ENCODE measurements at regions of chr10 and their contacts with region 1.

Region 1: DNA sequence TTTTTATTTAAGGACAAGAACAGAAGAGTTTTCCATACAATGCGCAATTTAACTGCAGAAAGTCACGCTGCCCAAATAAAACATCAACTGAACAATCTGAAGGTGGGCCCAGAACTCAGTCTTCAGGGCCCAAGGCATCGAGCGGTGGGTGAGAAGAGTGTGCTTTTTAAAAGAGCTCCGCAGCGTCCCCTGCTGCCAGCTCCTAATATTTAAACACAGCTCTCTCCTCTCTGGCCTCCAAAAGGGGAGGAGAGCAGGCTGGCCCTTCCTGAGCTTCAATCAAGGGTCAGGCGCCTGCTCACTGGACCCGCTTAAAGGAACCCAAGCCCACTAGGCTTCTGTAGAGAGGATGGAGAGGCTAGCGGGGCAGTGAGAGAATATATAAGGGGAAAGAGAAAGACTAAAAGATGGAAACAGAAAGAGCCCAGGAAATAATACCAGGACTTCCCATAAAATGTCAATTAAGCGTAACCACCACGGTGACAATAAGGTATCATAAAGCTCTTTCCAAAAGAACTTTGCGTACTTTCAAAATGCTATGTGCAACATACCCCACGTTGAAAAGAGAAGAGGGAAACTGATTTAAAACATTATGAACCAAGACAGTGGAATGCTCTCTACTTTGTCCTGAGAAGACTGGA is 2.8 kb downstream of the FAM53B start:
- DNase-seq: no peak
- H3K4me3 ChIP-seq: peak overlapping the region; percentile 10 to 79 (median 58)
- H3K27ac ChIP-seq: peak overlapping the region; percentile 89 to 90 (median 89)
- H3K4me1 ChIP-seq: peaks cover 70 to 85% (median 84%) of the 10 kb centered on the region in 4 donors
- H3K27me3 ChIP-seq: no peaks in the 10 kb centered on the region
- CTCF ChIP-seq: peak; percentile 85 to 94 (median 89)
- EP300 ChIP-seq: no peak
- POLR2A ChIP-seq: no peak

Region 2: DNA sequence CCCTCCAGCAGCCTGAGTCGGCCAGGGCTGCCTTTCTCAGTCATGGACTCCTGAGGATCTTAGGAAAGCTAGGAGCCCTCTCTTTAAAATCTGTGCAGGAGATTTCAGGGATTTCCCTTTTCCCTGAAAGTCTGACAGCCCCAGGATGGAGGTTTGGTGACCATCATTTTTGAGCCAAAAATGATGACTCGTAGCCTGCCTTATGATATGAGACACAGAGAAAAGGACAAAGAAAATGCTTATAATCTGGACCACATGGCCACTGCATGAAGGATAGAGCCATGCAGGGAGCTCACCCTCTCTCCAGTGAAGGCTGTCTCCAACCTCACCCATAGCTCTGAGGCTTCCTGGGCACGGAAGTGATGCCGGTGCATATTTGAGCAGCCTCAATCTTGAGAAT is 541.4 kb before region 1 on chr10:
- intact Hi-C with region 1: no loop called
- DNase-seq: no peak
- H3K4me3 ChIP-seq: no peak overlapping the region
- H3K27ac ChIP-seq: no peak overlapping the region
- H3K4me1 ChIP-seq: peaks cover 0 to 3% (median 0%) of the 10 kb centered on the region in 4 donors
- H3K27me3 ChIP-seq: no peaks in the 10 kb centered on the region
- CTCF ChIP-seq: no peak
- EP300 ChIP-seq: no peak
- POLR2A ChIP-seq: no peak

Region 3: DNA sequence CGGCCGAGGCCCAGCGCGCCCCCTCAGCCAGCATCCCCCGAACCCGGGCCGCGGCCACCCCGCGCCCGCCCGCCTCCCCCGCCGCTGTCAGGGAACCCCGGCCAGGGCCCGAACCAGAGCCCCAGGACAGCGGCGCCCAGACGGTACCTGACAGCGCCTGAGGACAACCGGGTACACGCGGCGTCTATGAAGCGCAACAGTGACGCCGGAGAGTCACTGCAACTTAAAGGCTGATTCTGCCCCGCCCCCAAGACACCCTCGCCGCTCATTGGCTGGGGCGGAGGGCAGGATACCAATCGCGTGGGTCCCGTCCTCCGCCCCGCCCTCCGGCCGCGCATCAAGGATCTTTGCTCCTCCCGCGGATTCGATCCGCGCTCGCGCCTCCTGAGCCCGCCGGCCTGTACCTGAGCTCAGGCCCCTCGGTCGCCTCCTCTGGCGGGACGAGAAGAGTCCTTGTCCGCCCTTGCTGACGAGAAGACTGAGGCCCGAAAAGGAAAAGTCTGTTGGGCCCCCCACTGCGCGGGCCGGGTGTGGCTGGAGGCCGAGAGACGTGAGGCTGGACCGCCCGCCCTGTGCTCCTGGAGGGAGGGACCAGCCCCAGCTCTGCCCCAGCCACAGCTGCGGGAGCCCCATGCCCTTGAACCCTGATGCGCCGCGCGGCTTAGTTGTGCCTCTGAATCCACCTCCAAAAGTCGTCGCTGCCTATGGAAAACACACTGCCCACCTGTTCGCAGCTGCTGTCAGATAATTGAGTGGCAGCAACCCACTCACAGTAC is 322.5 kb before region 1 on chr10 and contains the start of gene OAT:
- intact Hi-C with region 1: loop called (anchors 5 kb)
- DNase-seq: peak; percentile 98
- H3K4me3 ChIP-seq: peak within 1 kb of the TSS; percentile 79 to 97 (median 94)
- H3K27ac ChIP-seq: peak within 1 kb of the TSS; percentile 97 to 99 (median 98)
- H3K4me1 ChIP-seq: peaks cover 14 to 46% (median 46%) of the 10 kb centered on the region in 4 donors
- H3K27me3 ChIP-seq: no peaks in the 10 kb centered on the region
- CTCF ChIP-seq: no peak
- EP300 ChIP-seq: no peak
- POLR2A ChIP-seq: peak; percentile 92
- total RNA-seq, gene OAT: 98.8 to 169 (median 143) TPM

Region 4: GRCh38 chr10:124539935-124540641 is 201.3 kb before region 1 on chr10:
- intact Hi-C with region 1: loop called (anchors 2 kb)
- DNase-seq: no peak
- H3K4me3 ChIP-seq: peak overlapping the region in 1 of 4 donors; percentile 21
- H3K27ac ChIP-seq: no peak overlapping the region
- H3K4me1 ChIP-seq: peaks cover 9 to 23% (median 16%) of the 10 kb centered on the region in 4 donors
- H3K27me3 ChIP-seq: no peaks in the 10 kb centered on the region
- CTCF ChIP-seq: peak; percentile 84 to 89 (median 89)
- EP300 ChIP-seq: no peak
- POLR2A ChIP-seq: no peak

Region 5: GRCh38 chr10:124632064-124632531 is 109.3 kb before region 1 on chr10:
- intact Hi-C with region 1: loop called (anchors 5 kb)
- DNase-seq: no peak
- H3K4me3 ChIP-seq: no peak overlapping the region
- H3K27ac ChIP-seq: peak overlapping the region in 3 of 4 donors; percentile 10 to 62 (median 46)
- H3K4me1 ChIP-seq: peaks cover 58 to 68% (median 61%) of the 10 kb centered on the region in 4 donors
- H3K27me3 ChIP-seq: no peaks in the 10 kb centered on the region
- CTCF ChIP-seq: peak; percentile 37 to 49 (median 38)
- EP300 ChIP-seq: no peak
- POLR2A ChIP-seq: no peak

Region 6: DNA sequence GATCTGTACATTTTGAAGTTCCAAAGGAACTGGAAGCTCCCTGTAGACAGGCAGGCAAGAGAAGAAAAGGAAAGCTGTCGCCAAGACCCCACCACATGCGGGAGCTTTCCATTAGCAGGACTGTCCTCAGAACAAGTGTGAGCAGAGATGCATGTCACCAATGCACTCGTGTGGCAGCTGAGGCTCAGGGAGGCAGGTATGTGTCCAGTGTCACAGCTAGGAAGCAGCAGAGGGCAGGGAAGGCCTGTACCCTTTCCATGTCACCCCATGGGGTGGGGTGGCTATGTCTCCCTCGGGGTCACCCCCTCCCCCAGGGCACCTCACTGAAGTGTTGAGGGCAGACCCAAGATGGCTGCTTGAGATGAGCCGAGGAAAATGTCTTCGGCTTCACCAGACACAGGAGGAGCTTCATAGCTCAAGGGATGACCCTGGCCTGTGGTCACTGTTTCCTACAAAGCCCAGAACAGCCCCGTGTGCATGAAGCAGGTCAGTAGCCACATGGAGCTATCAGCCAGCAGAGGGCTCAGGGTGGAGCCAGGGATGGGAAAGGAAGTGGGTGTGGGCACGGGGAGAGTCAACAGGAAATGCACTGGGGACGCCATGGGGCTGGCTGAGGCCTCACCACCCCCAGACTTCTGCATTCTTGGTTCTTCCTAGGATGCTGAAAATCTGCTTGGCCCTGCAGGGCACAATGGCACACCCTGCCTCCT is 93.8 kb before region 1 on chr10:
- intact Hi-C with region 1: loop called (anchors 5 kb)
- DNase-seq: no peak
- H3K4me3 ChIP-seq: no peak overlapping the region
- H3K27ac ChIP-seq: peak overlapping the region; percentile 39 to 76 (median 72)
- H3K4me1 ChIP-seq: peaks cover 72 to 97% (median 91%) of the 10 kb centered on the region in 4 donors
- H3K27me3 ChIP-seq: no peaks in the 10 kb centered on the region
- CTCF ChIP-seq: peak in 2 of 3 experiments; percentile 5 to 26
- EP300 ChIP-seq: no peak
- POLR2A ChIP-seq: no peak

Region 7: GRCh38 chr10:124708922-124709520 is 32.4 kb before region 1 on chr10:
- intact Hi-C with region 1: loop called (anchors 5 kb)
- DNase-seq: no peak
- H3K4me3 ChIP-seq: no peak overlapping the region
- H3K27ac ChIP-seq: peak overlapping the region; percentile 49 to 86 (median 68)
- H3K4me1 ChIP-seq: peaks cover 75 to 94% (median 83%) of the 10 kb centered on the region in 4 donors
- H3K27me3 ChIP-seq: no peaks in the 10 kb centered on the region
- CTCF ChIP-seq: no peak
- EP300 ChIP-seq: no peak
- POLR2A ChIP-seq: no peak